Mucosa of descending colon (tissue), 3 donors: ENCODE measurements at regions of chr7 and their contacts with region 1.

Region 1: GRCh38 chr7:34281260-34281659 is 375.9 kb downstream of the BMPER start:
- DNase-seq: peak in 1 of 3 donors; percentile 13
- ATAC-seq: no peak
- H3K4me3 ChIP-seq: no peak overlapping the region
- H3K4me1 ChIP-seq: no peaks in the 10 kb centered on the region
- CTCF ChIP-seq: no peak

Region 2: GRCh38 chr7:34143402-34143801 is 137.9 kb before region 1 on chr7:
- intact Hi-C with region 1: loop called in 1 of 2 experiments (anchors 5 kb)
- DNase-seq: no peak
- ATAC-seq: no peak
- H3K4me3 ChIP-seq: no peak overlapping the region
- H3K4me1 ChIP-seq: no peaks in the 10 kb centered on the region
- CTCF ChIP-seq: no peak